ENCODE measurements at regions of chr9 and their contacts with region 1.

Region 1: GRCh38 chr9:129737479-129738274 is 15.2 kb downstream of the PTGES start:
- DNase-seq: peak; percentile 90
- ATAC-seq: peak; percentile 86
- H3K4me3 ChIP-seq: peak overlapping the region; percentile 2 to 81 (median 66)
- H3K4me3 Mint-ChIP-seq: peak overlapping the region; percentile 71
- H3K27ac ChIP-seq: peak overlapping the region in 1 of 2 donors; percentile 78
- H3K27ac Mint-ChIP-seq: peak overlapping the region; percentile 74
- H3K4me1 ChIP-seq: peaks cover 0 to 16% of the 10 kb centered on the region in 2 donors
- H3K4me1 Mint-ChIP-seq: peaks cover 7% of the 10 kb centered on the region
- H3K27me3 ChIP-seq: peaks cover 0 to 12% (median 0%) of the 10 kb centered on the region in 4 experiments
- H3K27me3 Mint-ChIP-seq: no peaks in the 10 kb centered on the region
- CTCF ChIP-seq: peak; percentile 91

Region 2: DNA sequence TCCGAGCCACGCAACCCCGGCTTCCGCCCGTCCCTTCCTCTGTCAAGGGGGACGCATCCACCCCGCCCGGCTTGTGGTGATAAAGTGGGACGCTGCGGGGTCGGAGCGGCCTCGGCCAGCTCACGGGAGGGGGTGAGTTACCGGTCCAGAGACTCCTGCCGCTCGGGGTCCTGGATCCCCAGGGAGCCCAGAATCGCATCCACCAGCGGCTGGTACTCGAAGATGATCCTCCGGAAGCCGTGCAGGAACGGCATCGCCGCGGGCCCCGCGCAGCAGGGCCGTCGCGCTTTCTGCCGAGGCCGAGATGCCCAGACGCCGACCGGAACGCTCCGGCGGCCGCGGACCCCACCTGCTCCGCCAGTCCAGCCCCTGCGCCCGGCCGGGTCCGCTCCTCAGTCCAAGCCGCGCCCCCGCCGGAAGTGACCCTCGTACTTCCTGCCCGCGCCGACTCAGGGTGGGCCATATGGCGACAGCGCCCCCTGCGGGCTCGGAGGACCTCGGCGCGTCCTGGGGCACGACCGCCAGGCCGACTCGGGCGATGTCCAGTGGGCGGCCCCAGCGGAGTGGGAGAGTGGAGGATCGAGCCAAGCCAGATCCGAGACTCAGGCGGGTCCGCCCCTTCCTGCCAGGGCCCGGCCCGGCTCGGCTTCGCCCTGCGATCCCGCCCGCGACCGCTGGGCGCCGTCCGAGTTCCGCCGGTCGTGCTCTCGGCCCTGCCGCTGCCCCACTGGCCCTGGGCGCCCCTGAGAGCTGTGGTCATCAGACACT is 95.7 kb before region 1 on chr9 and contains the start of gene ASB6:
- CTCF ChIA-PET with region 1: interaction called, 3 read pairs
- POLR2A ChIA-PET with region 1: no interaction called
- intact Hi-C with region 1: loop called (anchors 5 kb)
- DNase-seq: peak; percentile 96
- ATAC-seq: peak; percentile 95
- H3K4me3 ChIP-seq: peak within 1 kb of the TSS; percentile 61 to 91 (median 84)
- H3K4me3 Mint-ChIP-seq: peak within 1 kb of the TSS; percentile 87
- H3K27ac ChIP-seq: peak within 1 kb of the TSS; percentile 54 to 86
- H3K27ac Mint-ChIP-seq: peak within 1 kb of the TSS; percentile 91
- H3K4me1 ChIP-seq: peaks cover 12 to 17% of the 10 kb centered on the region in 2 donors
- H3K4me1 Mint-ChIP-seq: peaks cover 26% of the 10 kb centered on the region
- H3K27me3 ChIP-seq: no peaks in the 10 kb centered on the region
- H3K27me3 Mint-ChIP-seq: no peaks in the 10 kb centered on the region
- CTCF ChIP-seq: peak; percentile 100
- total RNA-seq, gene ASB6: 24.8 and 27.7 TPM in 2 replicates

Region 3: GRCh38 chr9:129783516-129784361 is 46.1 kb after region 1 on chr9:
- CTCF ChIA-PET with region 1: interaction called, 57 read pairs
- POLR2A ChIA-PET with region 1: no interaction called
- intact Hi-C with region 1: loop called (anchors 1 kb)
- DNase-seq: peak; percentile 81
- ATAC-seq: peak; percentile 99
- H3K4me3 ChIP-seq: no peak overlapping the region
- H3K4me3 Mint-ChIP-seq: no peak overlapping the region
- H3K27ac ChIP-seq: no peak overlapping the region
- H3K27ac Mint-ChIP-seq: no peak overlapping the region
- H3K4me1 ChIP-seq: no peaks in the 10 kb centered on the region
- H3K4me1 Mint-ChIP-seq: no peaks in the 10 kb centered on the region
- H3K27me3 ChIP-seq: peaks cover 0 to 19% (median 1%) of the 10 kb centered on the region in 4 experiments
- H3K27me3 Mint-ChIP-seq: peaks cover 19% of the 10 kb centered on the region
- CTCF ChIP-seq: peak; percentile 89

Region 4: GRCh38 chr9:130107234-130107861 is 369.7 kb after region 1 on chr9:
- CTCF ChIA-PET with region 1: no interaction called
- POLR2A ChIA-PET with region 1: no interaction called
- intact Hi-C with region 1: loop called (anchors 5 kb)
- DNase-seq: peak; percentile 85
- ATAC-seq: peak; percentile 80
- H3K4me3 ChIP-seq: no peak overlapping the region
- H3K4me3 Mint-ChIP-seq: no peak overlapping the region
- H3K27ac ChIP-seq: no peak overlapping the region
- H3K27ac Mint-ChIP-seq: peak overlapping the region; percentile 42
- H3K4me1 ChIP-seq: no peaks in the 10 kb centered on the region
- H3K4me1 Mint-ChIP-seq: peaks cover 11% of the 10 kb centered on the region
- H3K27me3 ChIP-seq: no peaks in the 10 kb centered on the region
- H3K27me3 Mint-ChIP-seq: no peaks in the 10 kb centered on the region
- CTCF ChIP-seq: peak; percentile 89